Gastrocnemius medialis (tissue), 4 donors: ENCODE measurements at regions of chr12 and their contacts with region 1.

Region 1: DNA sequence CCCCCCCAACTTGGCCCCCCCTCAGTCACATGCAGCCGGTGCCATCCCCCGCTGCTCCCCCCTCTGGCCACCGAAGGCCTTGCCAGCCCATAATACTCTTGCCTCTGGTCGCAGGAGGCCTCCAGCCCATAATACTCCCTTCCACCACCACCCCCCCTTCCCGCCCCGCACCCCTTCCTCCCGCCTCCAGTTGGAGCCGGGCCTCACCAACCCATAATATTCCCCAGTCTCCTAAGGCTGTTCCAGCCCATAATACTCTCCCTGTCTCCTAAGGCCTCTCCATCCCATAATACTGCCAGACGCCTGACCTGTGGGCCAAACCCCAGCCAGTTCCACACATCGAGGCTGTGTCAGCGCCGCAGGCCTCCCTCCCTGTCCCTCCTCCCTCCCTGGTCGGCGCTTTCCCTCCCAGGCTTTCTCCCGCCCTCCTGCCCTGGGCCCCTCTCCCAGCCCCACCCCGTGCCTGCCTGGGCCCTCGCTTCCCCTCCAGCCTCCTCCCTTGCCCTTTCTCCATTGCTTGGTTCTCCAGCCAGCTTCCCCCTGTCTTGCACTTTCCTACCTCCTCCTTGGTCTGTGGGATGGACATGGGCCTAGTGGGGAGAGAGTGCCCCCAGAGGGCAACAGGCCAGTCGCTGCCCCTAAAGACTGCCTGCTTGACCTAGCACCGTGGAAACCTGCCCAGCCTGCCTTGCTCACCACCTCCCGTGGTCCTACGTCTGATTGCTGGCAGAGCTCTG is 6.8 kb upstream of the CHD4 start:
- DNase-seq: peak; percentile 70 to 83
- ATAC-seq: peak; percentile 75 to 81
- H3K4me3 ChIP-seq: no peak overlapping the region
- H3K27ac ChIP-seq: peak overlapping the region; percentile 74 to 93 (median 84)
- H3K4me1 ChIP-seq: peaks cover 16 to 25% of the 10 kb centered on the region in 2 donors
- H3K27me3 ChIP-seq: no peaks in the 10 kb centered on the region
- CTCF ChIP-seq: no peak
- POLR2A ChIP-seq: no peak

Region 2: DNA sequence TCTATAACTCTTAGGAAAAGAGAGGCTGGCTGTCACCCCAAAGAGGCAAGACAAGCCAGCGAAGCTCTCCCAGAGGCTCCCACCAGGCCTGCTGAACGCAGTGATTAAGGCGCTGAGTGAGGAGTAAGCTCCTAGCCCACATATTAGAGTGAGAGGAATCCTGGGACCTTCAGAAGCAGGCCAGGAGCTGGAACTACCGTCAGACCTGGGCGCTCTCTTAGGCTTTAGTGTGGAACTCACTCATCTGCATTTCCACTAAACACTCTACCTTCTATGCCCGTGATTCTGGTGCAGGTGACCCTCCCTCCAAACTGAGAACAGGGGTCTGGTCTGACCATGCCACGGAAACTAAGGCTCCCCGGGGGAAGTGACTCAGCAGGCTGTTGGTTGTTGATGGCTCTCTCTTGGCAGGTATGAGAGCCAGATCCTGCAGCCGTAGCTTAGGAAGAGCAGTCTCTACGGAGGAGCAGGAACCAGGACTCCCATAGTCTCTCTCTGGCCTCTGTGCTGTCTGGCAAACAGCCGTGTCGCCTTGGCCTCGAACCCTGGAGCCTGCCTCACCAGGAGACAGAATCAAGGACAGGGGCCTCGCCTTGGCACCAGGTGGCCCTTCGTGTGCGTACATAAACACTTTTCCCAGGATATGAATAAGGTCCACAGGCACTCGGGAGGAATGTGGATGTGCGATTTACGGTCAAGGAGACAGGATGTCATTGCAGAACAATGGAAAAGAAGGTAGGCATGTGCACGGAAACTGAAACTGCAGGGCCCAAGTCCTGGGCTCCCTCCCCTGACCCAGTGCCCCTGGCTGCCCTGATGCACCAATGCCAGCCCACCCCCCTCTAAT is 497.5 kb before region 1 on chr12:
- in situ Hi-C with region 1: no loop called
- intact Hi-C with region 1: no loop called
- DNase-seq: no peak
- ATAC-seq: peak; percentile 51 to 54
- H3K4me3 ChIP-seq: peak overlapping the region in 1 of 4 donors; percentile 53
- H3K27ac ChIP-seq: peak overlapping the region; percentile 47 to 80 (median 71)
- H3K4me1 ChIP-seq: no peaks in the 10 kb centered on the region
- H3K27me3 ChIP-seq: no peaks in the 10 kb centered on the region
- CTCF ChIP-seq: no peak
- POLR2A ChIP-seq: peak; percentile 9 to 12

Region 3: GRCh38 chr12:6647083-6647604 is 33.2 kb after region 1 on chr12 and contains the start of gene ACRBP:
- in situ Hi-C with region 1: no loop called
- intact Hi-C with region 1: loop called (anchors 2 kb)
- DNase-seq: peak; percentile 45 to 72
- ATAC-seq: peak; percentile 77 to 85
- H3K4me3 ChIP-seq: peak within 1 kb of the TSS; percentile 49 to 63 (median 58)
- H3K27ac ChIP-seq: peak within 1 kb of the TSS; percentile 16 to 58 (median 54)
- H3K4me1 ChIP-seq: peaks cover 0 to 6% of the 10 kb centered on the region in 2 donors
- H3K27me3 ChIP-seq: peaks cover 0 to 3% (median 0%) of the 10 kb centered on the region in 3 donors
- CTCF ChIP-seq: no peak
- POLR2A ChIP-seq: peak in 1 of 2 donors; percentile 29
- total RNA-seq, gene ACRBP: 0.27 to 0.71 (median 0.65) TPM in 3 of 4 donors, not detected in the other

Region 4: GRCh38 chr12:6662906-6663742 is 49.2 kb after region 1 on chr12 and contains the start of gene ING4:
- in situ Hi-C with region 1: no loop called
- intact Hi-C with region 1: loop called (anchors 1 kb)
- DNase-seq: peak; percentile 97 to 99
- ATAC-seq: peak; percentile 100
- H3K4me3 ChIP-seq: peak within 1 kb of the TSS; percentile 66 to 97 (median 81)
- H3K27ac ChIP-seq: peak within 1 kb of the TSS; percentile 78 to 84 (median 80)
- H3K4me1 ChIP-seq: peaks cover 12 to 18% of the 10 kb centered on the region in 2 donors
- H3K27me3 ChIP-seq: no peaks in the 10 kb centered on the region
- CTCF ChIP-seq: no peak
- POLR2A ChIP-seq: no peak
- total RNA-seq, gene ING4: 12.8 to 28.9 (median 19.7) TPM

Region 5: DNA sequence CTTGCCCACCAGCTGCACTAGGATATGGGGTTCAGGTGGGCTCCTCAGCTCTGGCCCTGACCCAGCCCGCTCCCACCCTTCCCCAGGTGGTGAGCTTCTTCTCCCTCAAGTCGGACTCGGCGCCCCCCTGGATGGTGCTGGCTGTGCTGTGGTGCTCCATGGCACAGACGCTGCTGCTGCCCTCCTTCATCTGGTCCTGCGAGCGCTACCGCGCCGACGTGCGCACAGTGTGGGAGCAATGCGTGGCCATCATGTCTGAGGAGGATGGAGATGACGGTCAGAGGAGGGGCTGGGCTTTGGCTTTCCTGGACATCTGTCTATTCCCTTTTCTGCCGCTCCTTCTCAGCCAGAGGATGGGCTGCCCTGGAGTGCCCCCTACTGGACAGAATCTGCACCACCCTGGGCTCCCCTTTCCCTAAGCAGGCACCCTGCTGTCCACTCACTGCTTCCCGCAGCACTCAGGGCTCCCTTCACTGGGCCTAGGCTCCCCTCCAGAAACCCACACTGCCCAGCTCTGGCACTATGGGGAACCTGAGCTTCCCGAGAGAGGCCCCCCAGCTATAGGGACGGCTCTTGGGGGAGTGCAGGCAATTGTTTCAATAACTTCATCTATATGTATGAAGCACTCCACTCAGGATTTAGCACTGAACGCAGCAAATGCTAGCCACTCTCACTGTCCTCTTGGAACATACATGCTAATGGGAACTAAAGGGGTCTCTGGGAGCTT is 211.6 kb after region 1 on chr12:
- in situ Hi-C with region 1: no loop called
- intact Hi-C with region 1: loop called (anchors 1 kb)
- DNase-seq: peak; percentile 48 to 69
- ATAC-seq: peak; percentile 63 to 75
- H3K4me3 ChIP-seq: no peak overlapping the region
- H3K27ac ChIP-seq: no peak overlapping the region
- H3K4me1 ChIP-seq: peaks cover 3 to 11% of the 10 kb centered on the region in 2 donors
- H3K27me3 ChIP-seq: peaks cover 31 to 78% (median 53%) of the 10 kb centered on the region in 3 donors
- CTCF ChIP-seq: peak; percentile 62 to 85 (median 80)
- POLR2A ChIP-seq: no peak